CD8-positive, alpha-beta T cell (primary cell): ENCODE measurements at regions of chr2 and their contacts with region 1.

Region 1: GRCh38 chr2:170651624-170652325 is 63.4 kb upstream of the SP5 start:
- DNase-seq: peak; percentile 5 to 87 (median 47)
- ATAC-seq: peak; percentile 97
- H3K4me3 ChIP-seq: no peak overlapping the region
- H3K4me3 Mint-ChIP-seq: peak overlapping the region; percentile 1
- H3K27ac ChIP-seq: no peak overlapping the region
- H3K27ac Mint-ChIP-seq: no peak overlapping the region
- H3K4me1 ChIP-seq: peaks cover 21% of the 10 kb centered on the region
- H3K4me1 Mint-ChIP-seq: peaks cover 30% of the 10 kb centered on the region
- H3K27me3 ChIP-seq: no peaks in the 10 kb centered on the region
- H3K27me3 Mint-ChIP-seq: peaks cover 4% of the 10 kb centered on the region
- CTCF ChIP-seq: no peak

Region 2: GRCh38 chr2:170354855-170355780 is 296.7 kb before region 1 on chr2:
- CTCF ChIA-PET with region 1: no interaction called
- POLR2A ChIA-PET with region 1: no interaction called
- intact Hi-C with region 1: no loop called
- DNase-seq: peak in 1 of 9 experiments; percentile 22
- ATAC-seq: no peak
- H3K4me3 ChIP-seq: no peak overlapping the region
- H3K4me3 Mint-ChIP-seq: no peak overlapping the region
- H3K27ac ChIP-seq: no peak overlapping the region
- H3K27ac Mint-ChIP-seq: no peak overlapping the region
- H3K4me1 ChIP-seq: peaks cover 16% of the 10 kb centered on the region
- H3K4me1 Mint-ChIP-seq: peaks cover 19% of the 10 kb centered on the region
- H3K27me3 ChIP-seq: no peaks in the 10 kb centered on the region
- H3K27me3 Mint-ChIP-seq: peaks cover 2% of the 10 kb centered on the region
- CTCF ChIP-seq: no peak

Region 3: DNA sequence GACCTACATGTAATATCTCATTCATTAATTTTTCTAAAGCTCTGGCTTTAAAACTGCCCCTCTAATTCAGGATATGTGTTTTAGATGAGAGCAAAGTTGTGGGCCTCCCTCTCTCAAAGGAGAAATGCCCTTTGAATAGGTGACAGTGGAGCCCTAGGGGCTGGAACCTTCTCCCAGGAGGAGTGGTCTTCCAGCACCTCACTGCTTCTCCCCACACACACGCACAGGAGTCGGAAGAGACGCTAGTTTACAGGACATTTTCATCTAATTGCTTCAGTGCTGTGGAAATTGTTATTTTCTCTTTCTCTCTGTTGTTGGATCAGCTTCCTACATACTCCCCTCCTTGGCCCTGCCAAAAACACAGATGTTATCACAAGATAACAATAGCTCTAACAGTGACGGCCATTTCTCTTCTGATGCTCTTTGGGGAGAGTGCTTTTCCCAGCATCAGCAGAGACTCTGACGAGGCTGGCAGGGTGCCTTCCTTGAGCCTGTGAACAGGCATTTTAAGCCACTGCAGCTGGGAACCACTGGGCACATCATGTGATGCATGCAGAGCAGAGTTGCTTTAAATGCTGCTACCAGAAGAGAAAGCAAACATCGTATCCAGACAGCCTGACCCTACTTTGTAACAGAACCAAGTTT is 146.0 kb before region 1 on chr2:
- CTCF ChIA-PET with region 1: no interaction called
- POLR2A ChIA-PET with region 1: no interaction called
- intact Hi-C with region 1: loop called in 1 of 2 experiments (anchors 1 kb)
- DNase-seq: peak in 1 of 9 experiments; percentile 4
- ATAC-seq: no peak
- H3K4me3 ChIP-seq: no peak overlapping the region
- H3K4me3 Mint-ChIP-seq: no peak overlapping the region
- H3K27ac ChIP-seq: no peak overlapping the region
- H3K27ac Mint-ChIP-seq: no peak overlapping the region
- H3K4me1 ChIP-seq: peaks cover 32% of the 10 kb centered on the region
- H3K4me1 Mint-ChIP-seq: peaks cover 39% of the 10 kb centered on the region
- H3K27me3 ChIP-seq: no peaks in the 10 kb centered on the region
- H3K27me3 Mint-ChIP-seq: peaks cover 19% of the 10 kb centered on the region
- CTCF ChIP-seq: no peak

Region 4: GRCh38 chr2:170669919-170670318 is 18.1 kb after region 1 on chr2:
- CTCF ChIA-PET with region 1: no interaction called
- POLR2A ChIA-PET with region 1: no interaction called
- intact Hi-C with region 1: no loop called
- DNase-seq: no peak
- ATAC-seq: no peak
- H3K4me3 ChIP-seq: no peak overlapping the region
- H3K4me3 Mint-ChIP-seq: no peak overlapping the region
- H3K27ac ChIP-seq: no peak overlapping the region
- H3K27ac Mint-ChIP-seq: no peak overlapping the region
- H3K4me1 ChIP-seq: no peaks in the 10 kb centered on the region
- H3K4me1 Mint-ChIP-seq: no peaks in the 10 kb centered on the region
- H3K27me3 ChIP-seq: no peaks in the 10 kb centered on the region
- H3K27me3 Mint-ChIP-seq: peaks cover 11% of the 10 kb centered on the region
- CTCF ChIP-seq: no peak

Region 5: GRCh38 chr2:170703776-170704476 is 52.2 kb after region 1 on chr2:
- CTCF ChIA-PET with region 1: no interaction called
- POLR2A ChIA-PET with region 1: no interaction called
- intact Hi-C with region 1: loop called in 1 of 2 experiments (anchors 5 kb)
- DNase-seq: no peak
- ATAC-seq: no peak
- H3K4me3 ChIP-seq: no peak overlapping the region
- H3K4me3 Mint-ChIP-seq: no peak overlapping the region
- H3K27ac ChIP-seq: no peak overlapping the region
- H3K27ac Mint-ChIP-seq: no peak overlapping the region
- H3K4me1 ChIP-seq: no peaks in the 10 kb centered on the region
- H3K4me1 Mint-ChIP-seq: peaks cover 8% of the 10 kb centered on the region
- H3K27me3 ChIP-seq: peaks cover 0 to 4% of the 10 kb centered on the region in 2 experiments
- H3K27me3 Mint-ChIP-seq: peaks cover 29% of the 10 kb centered on the region
- CTCF ChIP-seq: no peak

Region 6: DNA sequence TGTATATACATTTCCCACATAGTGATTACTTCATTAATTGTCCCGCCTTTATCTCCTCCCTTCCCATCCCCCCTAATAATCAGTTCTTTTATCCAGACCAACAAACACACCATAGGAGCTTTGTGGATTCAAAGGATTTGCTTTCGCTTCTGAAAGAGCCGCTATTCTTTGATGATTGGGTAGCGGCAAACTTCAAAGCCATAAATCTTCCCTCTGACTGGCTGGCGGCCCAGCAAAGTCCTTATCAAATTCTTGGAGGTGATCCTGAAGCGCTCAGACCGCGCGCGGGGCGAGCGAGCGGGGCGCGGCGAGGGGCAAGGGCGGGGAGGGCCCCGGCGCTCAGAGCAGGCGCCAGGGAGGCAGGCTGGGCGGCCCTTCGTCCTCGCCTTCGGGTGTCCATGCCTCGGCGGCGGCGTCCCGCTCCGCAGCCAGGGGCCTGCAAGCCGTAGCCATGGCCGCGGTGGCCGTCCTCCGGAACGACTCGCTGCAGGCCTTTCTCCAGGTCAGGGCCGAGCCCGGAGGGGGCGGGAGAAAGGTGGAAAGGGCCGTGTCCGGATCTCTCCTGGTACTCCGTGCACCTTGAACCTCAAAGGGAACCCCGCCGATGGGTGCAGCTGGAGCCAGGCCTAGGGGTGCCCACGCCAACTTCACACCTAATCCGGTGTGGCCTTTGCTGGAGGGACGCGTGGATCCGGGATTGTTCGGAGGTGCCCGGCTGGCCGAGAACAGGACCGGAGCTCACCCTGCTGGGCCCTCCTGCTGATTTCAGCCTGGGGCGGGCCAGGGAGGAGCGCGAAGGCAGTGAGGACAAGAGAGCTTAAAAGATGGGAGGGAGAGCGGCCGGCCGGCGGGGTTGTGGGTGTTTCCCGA is 63.5 kb after region 1 on chr2 and contains the start of gene SP5:
- CTCF ChIA-PET with region 1: no interaction called
- POLR2A ChIA-PET with region 1: no interaction called
- intact Hi-C with region 1: loop called (anchors 5 kb)
- DNase-seq: peak in 5 of 9 experiments; percentile 19 to 62 (median 32)
- ATAC-seq: peak; percentile 46
- H3K4me3 ChIP-seq: peak within 1 kb of the TSS; percentile 44
- H3K4me3 Mint-ChIP-seq: peak within 1 kb of the TSS; percentile 90
- H3K27ac ChIP-seq: no peak within 1 kb of the TSS
- H3K27ac Mint-ChIP-seq: peak within 1 kb of the TSS; percentile 37
- H3K4me1 ChIP-seq: peaks cover 50% of the 10 kb centered on the region
- H3K4me1 Mint-ChIP-seq: peaks cover 43% of the 10 kb centered on the region
- H3K27me3 ChIP-seq: peaks cover 46 to 47% of the 10 kb centered on the region in 2 experiments
- H3K27me3 Mint-ChIP-seq: peaks cover 59% of the 10 kb centered on the region
- CTCF ChIP-seq: no peak
- total RNA-seq, gene SP5: not detected

Region 7: DNA sequence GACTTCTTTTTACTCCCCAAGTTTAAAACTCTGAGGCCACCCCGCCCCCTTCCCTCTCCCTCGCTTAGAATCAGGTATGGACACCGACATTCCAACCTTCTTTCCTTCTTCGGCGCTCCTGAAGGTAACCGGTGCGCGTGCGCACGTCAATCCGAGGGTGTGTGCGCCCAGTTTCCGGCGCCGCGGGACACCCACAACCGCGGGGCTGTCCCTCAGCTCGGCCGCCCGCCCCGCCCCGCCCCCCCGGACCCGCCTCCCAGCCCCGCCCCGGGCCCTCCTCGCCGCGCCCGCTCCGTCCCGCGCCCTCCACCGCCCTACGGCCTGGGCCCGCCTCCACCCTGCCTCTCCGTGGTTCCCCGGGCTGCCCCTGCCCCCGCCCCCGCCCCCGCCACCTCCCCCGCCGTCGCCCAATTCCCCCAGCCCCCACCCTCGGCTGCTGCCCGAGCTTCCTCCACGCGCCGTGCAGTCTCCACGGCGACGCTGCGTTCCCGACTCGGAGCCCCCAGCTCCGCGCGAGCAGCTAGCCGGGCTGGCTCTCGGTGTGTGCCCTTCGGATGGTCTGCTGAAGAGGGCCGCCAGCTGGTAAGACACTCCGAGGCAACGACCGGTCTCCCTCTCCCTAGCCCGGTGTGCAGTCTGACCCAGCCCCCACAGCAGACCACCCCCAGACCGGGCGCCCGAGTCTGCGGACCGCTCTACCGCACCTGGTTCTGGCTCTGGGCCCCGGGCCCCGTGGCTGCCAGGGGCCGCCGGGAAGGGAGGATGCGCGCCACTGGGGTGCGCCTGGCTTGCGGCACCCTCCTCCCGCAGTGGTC is 119.0 kb after region 1 on chr2:
- CTCF ChIA-PET with region 1: no interaction called
- POLR2A ChIA-PET with region 1: no interaction called
- intact Hi-C with region 1: loop called in 1 of 2 experiments (anchors 5 kb)
- DNase-seq: peak; percentile 29 to 86 (median 51)
- ATAC-seq: peak; percentile 84
- H3K4me3 ChIP-seq: peak overlapping the region; percentile 63 to 74
- H3K4me3 Mint-ChIP-seq: peak overlapping the region; percentile 82
- H3K27ac ChIP-seq: peak overlapping the region in 1 of 2 experiments; percentile 23
- H3K27ac Mint-ChIP-seq: no peak overlapping the region
- H3K4me1 ChIP-seq: peaks cover 12% of the 10 kb centered on the region
- H3K4me1 Mint-ChIP-seq: peaks cover 12% of the 10 kb centered on the region
- H3K27me3 ChIP-seq: no peaks in the 10 kb centered on the region
- H3K27me3 Mint-ChIP-seq: peaks cover 10% of the 10 kb centered on the region
- CTCF ChIP-seq: no peak